ENCODE measurements at regions of chr6 and their contacts with region 1.

Region 1: GRCh38 chr6:2436403-2437154 is 191.2 kb upstream of the GMDS start:
- DNase-seq: no peak
- H3K4me3 Mint-ChIP-seq: no peak overlapping the region
- H3K27ac Mint-ChIP-seq: no peak overlapping the region
- H3K4me1 Mint-ChIP-seq: peaks cover 13% of the 10 kb centered on the region
- H3K27me3 Mint-ChIP-seq: no peaks in the 10 kb centered on the region
- CTCF ChIP-seq: no peak

Region 2: DNA sequence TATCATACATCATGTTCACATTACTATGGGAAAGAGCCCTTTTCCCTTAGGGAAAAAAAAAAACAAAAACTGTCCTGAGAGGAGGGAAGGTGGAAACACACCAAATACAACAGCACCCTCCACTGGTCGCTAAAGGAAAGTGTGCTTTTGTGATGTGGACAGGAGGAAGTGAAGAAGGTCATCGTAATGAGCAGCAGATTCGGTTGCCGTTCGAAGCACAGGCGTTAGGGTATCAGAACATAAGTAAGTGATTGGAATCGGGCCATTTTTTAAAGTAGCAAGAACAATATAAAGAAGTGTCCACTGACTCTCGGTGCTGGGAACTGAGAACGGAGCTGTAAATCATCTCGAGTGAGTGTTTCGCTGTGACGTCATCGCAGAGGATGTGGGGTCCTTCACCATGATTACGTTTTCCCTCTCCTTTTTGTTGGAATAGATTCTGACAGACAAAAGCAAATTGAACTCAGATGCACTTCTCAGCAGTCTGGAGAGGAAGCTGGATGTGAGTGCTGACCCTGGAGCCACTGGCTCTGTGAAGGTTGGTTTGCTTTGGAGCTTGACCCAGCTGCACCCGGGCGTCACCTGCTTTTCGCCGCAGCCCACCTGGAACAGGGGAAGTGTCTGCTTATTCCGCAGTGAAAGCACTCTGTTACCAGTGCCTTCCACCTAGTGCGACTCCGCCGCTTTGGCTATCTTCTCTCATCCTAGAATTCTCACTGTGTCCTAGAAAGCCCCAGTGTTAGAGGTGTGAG is 12.4 kb after region 1 on chr6:
- CTCF ChIA-PET with region 1: interaction called, 13 read pairs
- POLR2A ChIA-PET with region 1: no interaction called
- intact Hi-C with region 1: no loop called
- DNase-seq: peak; percentile 82
- H3K4me3 Mint-ChIP-seq: no peak overlapping the region
- H3K27ac Mint-ChIP-seq: no peak overlapping the region
- H3K4me1 Mint-ChIP-seq: peaks cover 6% of the 10 kb centered on the region
- H3K27me3 Mint-ChIP-seq: no peaks in the 10 kb centered on the region
- CTCF ChIP-seq: peak; percentile 67